Activated CD4-positive, alpha-beta memory T cell treated with anti-CD3 and anti-CD28 coated beads for 36 hours (primary cell): ENCODE measurements at regions of chr12 and their contacts with region 1.

Region 1: DNA sequence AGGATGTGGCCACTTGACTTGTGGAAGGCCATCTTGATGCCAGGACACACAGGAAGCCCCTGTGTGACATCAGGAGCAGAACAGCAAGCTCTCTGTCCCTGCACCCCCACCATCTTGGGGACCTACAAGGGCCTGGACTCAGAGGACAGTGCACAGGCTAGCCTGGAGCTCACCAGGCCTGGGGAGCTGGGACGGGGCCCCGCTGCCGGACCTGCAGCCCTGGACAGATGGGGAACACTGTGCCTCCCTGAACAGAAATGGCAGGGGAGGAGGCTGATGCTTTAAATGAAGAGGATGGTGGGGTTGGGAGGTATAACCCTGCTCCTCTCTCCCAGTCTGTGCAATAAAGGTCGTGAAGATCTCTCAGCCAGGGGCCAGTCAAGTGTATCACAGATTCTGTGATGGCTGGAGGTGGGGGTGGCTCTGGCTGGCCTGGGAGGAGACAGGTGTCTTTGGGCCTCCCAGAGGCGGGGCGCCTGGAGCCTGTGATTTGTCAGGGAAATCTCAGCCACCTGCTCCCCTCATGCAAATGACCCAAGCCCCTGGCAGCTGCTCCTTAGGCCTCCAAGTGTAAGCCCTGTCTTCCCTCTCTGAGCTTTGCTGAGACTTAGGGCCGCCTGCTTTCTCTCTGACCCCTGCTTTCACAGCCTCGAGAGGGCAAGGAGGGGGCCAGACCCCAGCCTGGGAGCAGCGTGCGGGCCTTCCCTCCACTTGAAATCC is 1.1 kb upstream of the GNB3 start:
- DNase-seq: no peak
- H3K4me3 Mint-ChIP-seq: no peak overlapping the region
- H3K27ac Mint-ChIP-seq: no peak overlapping the region
- H3K4me1 Mint-ChIP-seq: peaks cover 2% of the 10 kb centered on the region
- H3K27me3 Mint-ChIP-seq: no peaks in the 10 kb centered on the region

Region 2: DNA sequence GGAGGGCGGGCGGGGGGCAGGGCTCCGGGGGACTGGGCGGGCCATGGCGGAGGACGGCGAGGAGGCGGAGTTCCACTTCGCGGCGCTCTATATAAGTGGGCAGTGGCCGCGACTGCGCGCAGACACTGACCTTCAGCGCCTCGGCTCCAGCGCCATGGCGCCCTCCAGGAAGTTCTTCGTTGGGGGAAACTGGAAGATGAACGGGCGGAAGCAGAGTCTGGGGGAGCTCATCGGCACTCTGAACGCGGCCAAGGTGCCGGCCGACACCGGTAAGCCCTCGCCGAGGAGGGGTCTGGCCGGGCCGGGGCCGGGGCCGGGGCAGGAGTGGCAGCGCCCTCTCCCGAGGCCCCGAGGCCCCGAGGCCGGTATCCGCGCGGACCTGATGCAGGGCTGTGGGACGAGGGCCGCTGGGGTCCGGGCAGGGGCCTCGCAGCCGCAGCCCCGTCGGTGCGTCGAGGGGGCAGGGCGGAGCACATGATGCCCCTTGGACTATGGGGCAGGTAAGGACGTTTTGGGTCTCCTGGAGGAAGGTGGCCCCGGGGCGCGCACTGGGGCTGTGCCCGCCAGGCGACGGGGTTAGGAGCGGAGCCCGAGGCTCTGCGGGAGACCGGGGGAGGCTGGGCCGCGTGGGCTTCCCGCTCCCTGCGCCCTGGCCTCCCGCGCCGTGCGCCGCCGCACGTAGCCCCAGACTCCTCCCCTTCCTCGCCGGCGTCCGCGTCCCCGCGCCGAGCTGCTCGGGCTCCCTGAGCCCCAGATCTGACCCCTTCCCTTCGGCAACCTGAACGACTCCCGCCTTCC is 28.0 kb after region 1 on chr12 and contains the start of gene TPI1:
- CTCF ChIA-PET with region 1: interaction called, 16 read pairs
- POLR2A ChIA-PET with region 1: interaction called, 5 read pairs
- intact Hi-C with region 1: loop called (anchors 1 kb)
- DNase-seq: peak; percentile 88
- H3K4me3 Mint-ChIP-seq: peak within 1 kb of the TSS; percentile 98
- H3K27ac Mint-ChIP-seq: peak within 1 kb of the TSS; percentile 98
- H3K4me1 Mint-ChIP-seq: peaks cover 54% of the 10 kb centered on the region
- H3K27me3 Mint-ChIP-seq: no peaks in the 10 kb centered on the region
- total RNA-seq, gene TPI1: 1,432 to 1,495 TPM